ENCODE measurements at regions of chr3 and their contacts with region 1.

Region 1: GRCh38 chr3:81490541-81491288 is 270.7 kb downstream of the GBE1 start:
- DNase-seq: peak; percentile 89
- ATAC-seq: peak; percentile 96
- H3K4me3 ChIP-seq: no peak overlapping the region
- H3K27ac ChIP-seq: no peak overlapping the region
- H3K4me1 ChIP-seq: peaks cover 3% of the 10 kb centered on the region
- H3K27me3 ChIP-seq: no peaks in the 10 kb centered on the region
- CTCF ChIP-seq: peak; percentile 95

Region 2: GRCh38 chr3:81390796-81391195 is 99.9 kb before region 1 on chr3:
- CTCF ChIA-PET with region 1: interaction called, 11 read pairs
- POLR2A ChIA-PET with region 1: no interaction called
- intact Hi-C with region 1: no loop called
- DNase-seq: no peak
- ATAC-seq: no peak
- H3K4me3 ChIP-seq: no peak overlapping the region
- H3K27ac ChIP-seq: no peak overlapping the region
- H3K4me1 ChIP-seq: no peaks in the 10 kb centered on the region
- H3K27me3 ChIP-seq: no peaks in the 10 kb centered on the region
- CTCF ChIP-seq: no peak

Region 3: DNA sequence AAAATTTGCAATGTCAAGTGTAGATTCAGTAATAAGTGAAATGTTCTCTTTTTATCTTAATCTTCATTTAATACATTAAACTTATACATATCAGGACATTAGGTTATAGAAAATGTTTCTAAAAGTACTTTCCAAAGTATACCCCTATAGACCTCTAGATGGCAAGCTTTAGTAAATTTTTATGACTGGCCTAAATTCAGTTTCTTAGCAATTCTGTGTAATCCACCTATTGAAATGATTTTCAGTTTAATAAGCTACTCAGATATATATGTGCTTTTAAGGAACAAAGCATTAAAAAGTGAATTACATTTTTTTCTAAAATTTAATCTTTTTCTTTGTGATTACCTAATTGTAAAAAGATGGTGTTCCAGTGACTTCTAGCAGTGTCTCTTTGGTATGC is 71.5 kb before region 1 on chr3:
- CTCF ChIA-PET with region 1: interaction called, 6 read pairs
- POLR2A ChIA-PET with region 1: no interaction called
- intact Hi-C with region 1: loop called (anchors 1 kb)
- DNase-seq: peak; percentile 54
- ATAC-seq: peak; percentile 63; the same call in 1 of the 2 replicates
- H3K4me3 ChIP-seq: no peak overlapping the region
- H3K27ac ChIP-seq: no peak overlapping the region
- H3K4me1 ChIP-seq: no peaks in the 10 kb centered on the region
- H3K27me3 ChIP-seq: no peaks in the 10 kb centered on the region
- CTCF ChIP-seq: peak; percentile 77

Region 4: GRCh38 chr3:81554801-81555200 is 64.1 kb after region 1 on chr3:
- CTCF ChIA-PET with region 1: interaction called, 3 read pairs
- POLR2A ChIA-PET with region 1: no interaction called
- intact Hi-C with region 1: loop called (anchors 5 kb)
- DNase-seq: no peak
- ATAC-seq: peak; percentile 11
- H3K4me3 ChIP-seq: no peak overlapping the region
- H3K27ac ChIP-seq: peak overlapping the region; percentile 11; the same call in 1 of the 2 replicates
- H3K4me1 ChIP-seq: peaks cover 23% of the 10 kb centered on the region
- H3K27me3 ChIP-seq: no peaks in the 10 kb centered on the region
- CTCF ChIP-seq: no peak

Region 5: GRCh38 chr3:81581966-81582599 is 91.4 kb after region 1 on chr3:
- CTCF ChIA-PET with region 1: interaction called, 3 read pairs
- POLR2A ChIA-PET with region 1: no interaction called
- intact Hi-C with region 1: loop called (anchors 1 kb)
- DNase-seq: peak; percentile 78
- ATAC-seq: peak; percentile 94
- H3K4me3 ChIP-seq: no peak overlapping the region
- H3K27ac ChIP-seq: no peak overlapping the region
- H3K4me1 ChIP-seq: no peaks in the 10 kb centered on the region
- H3K27me3 ChIP-seq: no peaks in the 10 kb centered on the region
- CTCF ChIP-seq: peak; percentile 92

Region 6: GRCh38 chr3:81643721-81644120 is 153.0 kb after region 1 on chr3:
- CTCF ChIA-PET with region 1: interaction called, 3 read pairs
- POLR2A ChIA-PET with region 1: no interaction called
- intact Hi-C with region 1: loop called (anchors 1 kb)
- DNase-seq: peak; percentile 58
- ATAC-seq: peak; percentile 85
- H3K4me3 ChIP-seq: no peak overlapping the region
- H3K27ac ChIP-seq: no peak overlapping the region
- H3K4me1 ChIP-seq: peaks cover 9% of the 10 kb centered on the region; the same call in 1 of the 2 replicates
- H3K27me3 ChIP-seq: no peaks in the 10 kb centered on the region
- CTCF ChIP-seq: peak; percentile 74

Region 7: GRCh38 chr3:82392203-82392775 is 901.6 kb after region 1 on chr3:
- CTCF ChIA-PET with region 1: no interaction called
- POLR2A ChIA-PET with region 1: no interaction called
- intact Hi-C with region 1: no loop called
- DNase-seq: peak; percentile 7
- ATAC-seq: no peak
- H3K4me3 ChIP-seq: no peak overlapping the region
- H3K27ac ChIP-seq: no peak overlapping the region
- H3K4me1 ChIP-seq: no peaks in the 10 kb centered on the region
- H3K27me3 ChIP-seq: no peaks in the 10 kb centered on the region
- CTCF ChIP-seq: no peak